ENCODE measurements at regions of chr11 and their contacts with region 1.

Region 1: DNA sequence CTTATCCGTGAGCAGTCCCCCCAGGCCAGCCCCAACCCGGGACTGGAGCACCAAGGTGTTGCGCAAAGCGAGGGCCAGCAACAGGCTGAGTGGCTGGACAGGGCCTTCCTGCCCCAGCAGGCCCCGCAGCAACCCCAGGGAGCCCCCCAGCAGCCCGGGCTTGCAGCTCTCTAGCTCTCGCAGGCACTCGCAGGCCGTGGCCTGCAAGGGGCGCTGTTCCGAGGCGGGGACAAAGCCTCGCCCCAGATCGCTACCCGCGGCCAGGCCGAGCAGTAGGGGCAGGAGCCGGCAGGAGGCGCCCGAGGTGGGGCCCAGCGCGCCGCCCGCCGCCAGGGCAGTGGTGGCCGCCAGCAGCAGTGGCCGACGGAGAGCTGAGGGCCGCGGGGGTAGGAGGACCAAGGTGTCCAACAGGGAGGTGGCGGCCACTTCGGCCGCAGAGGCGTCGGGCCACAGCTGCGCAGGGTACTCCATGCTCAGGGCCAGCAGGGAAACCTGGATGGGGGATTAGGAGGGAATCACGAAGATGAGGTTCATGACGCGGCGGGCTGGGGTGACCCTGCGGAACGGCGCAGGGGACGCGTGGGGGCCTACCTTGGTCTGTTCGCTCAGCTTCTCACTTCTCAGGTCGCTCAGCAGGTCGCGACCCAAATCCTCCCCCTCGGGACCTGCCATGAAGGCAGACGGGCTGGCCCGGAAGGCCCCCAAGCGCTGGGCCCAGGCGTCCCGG is 762 bp downstream of the AP5B1 start:
- DNase-seq: peak; percentile 76 to 88
- ATAC-seq: peak; percentile 81 to 92
- H3K4me3 ChIP-seq: peak overlapping the region; percentile 98
- H3K27ac ChIP-seq: peak overlapping the region; percentile 93 to 98
- H3K4me1 ChIP-seq: peaks cover 11% of the 10 kb centered on the region
- CTCF ChIP-seq: peak; percentile 96
- EP300 ChIP-seq: no peak
- POLR2A ChIP-seq: peak; percentile 49
- RAD21 ChIP-seq: peak; percentile 29 to 66; a peak in 4 of 5 replicates

Region 2: GRCh38 chr11:65040847-65041621 is 739.0 kb before region 1 on chr11 and contains the start of gene SAC3D1:
- CTCF ChIA-PET with region 1: no interaction called
- POLR2A ChIA-PET with region 1: no interaction called
- DNase-seq: peak; percentile 96 to 98
- ATAC-seq: peak; percentile 93 to 97
- H3K4me3 ChIP-seq: peak within 1 kb of the TSS; percentile 84
- H3K27ac ChIP-seq: peak within 1 kb of the TSS; percentile 91 to 92
- H3K4me1 ChIP-seq: peaks cover 25% of the 10 kb centered on the region
- CTCF ChIP-seq: no peak
- EP300 ChIP-seq: no peak
- POLR2A ChIP-seq: peak; percentile 54
- RAD21 ChIP-seq: no peak
- polyA plus RNA-seq, gene SAC3D1: 9.4 and 12.9 TPM in 2 replicates

Region 3: DNA sequence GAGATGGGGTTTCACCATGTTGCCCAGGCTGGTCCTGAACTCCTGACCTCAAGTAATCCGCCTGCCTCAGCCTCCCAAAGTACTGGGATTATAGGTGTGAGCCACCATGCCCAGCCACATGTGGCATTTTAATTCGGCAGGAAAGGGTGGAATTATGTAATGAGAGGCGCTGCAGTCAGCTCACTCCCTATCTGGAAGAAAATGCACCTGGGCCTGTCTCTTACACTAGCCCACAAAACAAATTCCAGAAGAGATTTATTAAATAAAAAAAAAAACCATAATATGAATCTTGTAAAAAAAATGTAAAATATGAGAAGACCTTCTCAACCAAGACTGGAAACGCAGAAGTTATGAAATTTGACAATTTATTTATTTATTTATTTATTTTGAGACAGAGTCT is 76.2 kb before region 1 on chr11:
- CTCF ChIA-PET with region 1: interaction called, 18 read pairs
- POLR2A ChIA-PET with region 1: no interaction called
- DNase-seq: no peak
- ATAC-seq: no peak
- H3K4me3 ChIP-seq: no peak overlapping the region
- H3K27ac ChIP-seq: no peak overlapping the region
- H3K4me1 ChIP-seq: no peaks in the 10 kb centered on the region
- CTCF ChIP-seq: no peak
- EP300 ChIP-seq: no peak
- POLR2A ChIP-seq: no peak
- RAD21 ChIP-seq: no peak

Region 4: GRCh38 chr11:65726660-65727059 is 53.4 kb before region 1 on chr11:
- CTCF ChIA-PET with region 1: interaction called, 65 read pairs
- POLR2A ChIA-PET with region 1: no interaction called
- DNase-seq: no peak
- ATAC-seq: peak in 1 of 2 experiments; percentile 58; a peak in 3 of 6 replicates
- H3K4me3 ChIP-seq: no peak overlapping the region
- H3K27ac ChIP-seq: no peak overlapping the region
- H3K4me1 ChIP-seq: no peaks in the 10 kb centered on the region
- CTCF ChIP-seq: 0 out of 3 replicates have a peak, but pooled peaks have one; percentile 8
- EP300 ChIP-seq: no peak
- POLR2A ChIP-seq: no peak
- RAD21 ChIP-seq: no peak

Region 5: GRCh38 chr11:65743928-65744698 is 35.9 kb before region 1 on chr11:
- CTCF ChIA-PET with region 1: interaction called, 14 read pairs
- POLR2A ChIA-PET with region 1: no interaction called
- DNase-seq: peak; percentile 49 to 76
- ATAC-seq: peak; percentile 95 to 99
- H3K4me3 ChIP-seq: no peak overlapping the region
- H3K27ac ChIP-seq: no peak overlapping the region
- H3K4me1 ChIP-seq: no peaks in the 10 kb centered on the region
- CTCF ChIP-seq: peak; percentile 40; the same call in 1 of the 3 replicates
- EP300 ChIP-seq: no peak
- POLR2A ChIP-seq: no peak
- RAD21 ChIP-seq: peak; percentile 55 to 73

Region 6: GRCh38 chr11:65791691-65792213 is 11.7 kb after region 1 on chr11:
- CTCF ChIA-PET with region 1: interaction called, 173 read pairs
- POLR2A ChIA-PET with region 1: interaction called, 8 read pairs
- DNase-seq: no peak
- ATAC-seq: no peak
- H3K4me3 ChIP-seq: no peak overlapping the region
- H3K27ac ChIP-seq: no peak overlapping the region
- H3K4me1 ChIP-seq: peaks cover 14% of the 10 kb centered on the region; the same call in 2 of the 3 replicates
- CTCF ChIP-seq: no peak
- EP300 ChIP-seq: no peak
- POLR2A ChIP-seq: no peak
- RAD21 ChIP-seq: no peak

Region 7: GRCh38 chr11:65817835-65818742 is 38.1 kb after region 1 on chr11:
- CTCF ChIA-PET with region 1: interaction called, 132 read pairs
- POLR2A ChIA-PET with region 1: interaction called, 4 read pairs
- DNase-seq: peak; percentile 81 to 88
- ATAC-seq: peak; percentile 91 to 93
- H3K4me3 ChIP-seq: peak overlapping the region; percentile 57
- H3K27ac ChIP-seq: peak overlapping the region; percentile 82 to 89
- H3K4me1 ChIP-seq: peaks cover 6% of the 10 kb centered on the region; the same call in 1 of the 3 replicates
- CTCF ChIP-seq: peak; percentile 100
- EP300 ChIP-seq: no peak; a peak in 1 of 5 replicates
- POLR2A ChIP-seq: peak; percentile 50
- RAD21 ChIP-seq: peak; percentile 87 to 99

Region 8: GRCh38 chr11:65988791-65989592 is 209.0 kb after region 1 on chr11:
- CTCF ChIA-PET with region 1: interaction called, 19 read pairs
- POLR2A ChIA-PET with region 1: no interaction called
- DNase-seq: peak; percentile 89 to 96
- ATAC-seq: peak; percentile 96 to 98
- H3K4me3 ChIP-seq: no peak overlapping the region
- H3K27ac ChIP-seq: no peak overlapping the region
- H3K4me1 ChIP-seq: no peaks in the 10 kb centered on the region
- CTCF ChIP-seq: peak; percentile 99
- EP300 ChIP-seq: no peak
- POLR2A ChIP-seq: no peak
- RAD21 ChIP-seq: peak; percentile 95 to 98

Measured in A549 (cell line).